Heart right ventricle (tissue), 16 donors: ENCODE measurements at regions of chr9 and their contacts with region 1.

Region 1: GRCh38 chr9:128927731-128928411 is 7.1 kb downstream of the PHYHD1 start:
- DNase-seq: peak in 1 of 2 donors; percentile 54
- ATAC-seq: peak; percentile 56 to 86 (median 80)
- H3K4me3 ChIP-seq: no peak overlapping the region
- H3K27ac ChIP-seq: no peak overlapping the region
- H3K4me1 ChIP-seq: peaks cover 0 to 13% (median 8%) of the 10 kb centered on the region in 9 donors
- H3K27me3 ChIP-seq: no peaks in the 10 kb centered on the region
- CTCF ChIP-seq: peak; percentile 64 to 95 (median 85)

Region 2: GRCh38 chr9:128863647-128864046 is 64.2 kb before region 1 on chr9:
- intact Hi-C with region 1: loop called (anchors 1 to 2 kb)
- DNase-seq: peak; percentile 65 to 84
- ATAC-seq: peak; percentile 78 to 92 (median 86)
- H3K4me3 ChIP-seq: no peak overlapping the region
- H3K27ac ChIP-seq: no peak overlapping the region
- H3K4me1 ChIP-seq: peaks cover 0 to 22% (median 5%) of the 10 kb centered on the region in 9 donors
- H3K27me3 ChIP-seq: no peaks in the 10 kb centered on the region
- CTCF ChIP-seq: peak; percentile 93 to 99 (median 98)

Region 3: DNA sequence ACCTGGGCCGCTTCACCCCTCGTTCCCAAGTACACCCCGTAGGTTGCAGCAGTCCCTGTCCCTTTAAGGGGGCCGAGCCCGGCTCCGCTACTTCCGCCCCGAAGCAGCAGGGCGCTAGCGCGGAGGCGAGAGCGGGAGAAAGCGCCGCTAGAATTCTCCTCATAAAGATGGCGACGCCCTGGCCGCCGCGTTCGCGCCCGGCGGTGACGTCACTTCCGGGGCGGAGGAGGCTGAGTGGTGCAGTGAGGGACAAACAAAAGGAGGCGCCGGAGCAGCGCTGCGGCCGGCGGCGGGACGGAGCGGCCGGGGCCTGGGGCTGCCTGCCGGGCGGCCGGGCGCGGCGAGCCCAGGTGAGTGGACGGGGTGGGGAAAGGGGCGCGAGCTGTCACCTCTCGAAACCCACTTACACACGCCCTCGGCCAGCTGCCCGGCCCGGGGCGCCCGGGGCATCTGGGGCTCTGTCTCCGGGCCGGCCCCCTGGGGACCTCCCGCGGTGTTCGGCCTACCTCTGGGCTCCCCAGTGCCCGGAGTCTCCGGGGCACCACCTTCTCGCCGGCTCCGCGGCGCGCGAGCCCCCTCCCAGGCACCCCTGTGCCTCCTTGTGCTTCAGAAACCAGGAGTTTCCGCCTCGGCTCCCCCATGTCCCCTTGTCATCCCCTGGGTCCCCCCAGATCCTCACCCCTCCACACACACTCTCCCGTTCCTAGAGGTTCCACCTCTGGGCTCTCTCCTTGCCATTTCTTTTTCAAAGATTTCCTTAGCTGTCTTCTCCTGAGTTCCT is 45.8 kb before region 1 on chr9 and contains the starts of genes KYAT1 and LRRC8A:
- intact Hi-C with region 1: loop called in 4 of 10 experiments (anchors 2 to 5 kb)
- DNase-seq: peak; percentile 98 to 99
- ATAC-seq: peak; percentile 90 to 96 (median 94)
- H3K4me3 ChIP-seq: peak within 1 kb of the TSS; percentile 81 to 99 (median 96)
- H3K27ac ChIP-seq: peak within 1 kb of the TSS; percentile 96 to 100 (median 98)
- H3K4me1 ChIP-seq: peaks cover 4 to 79% (median 64%) of the 10 kb centered on the region in 9 donors
- H3K27me3 ChIP-seq: no peaks in the 10 kb centered on the region
- CTCF ChIP-seq: peak in 4 of 9 donors; percentile 14 to 39 (median 24)
- total RNA-seq, gene KYAT1: 8.9 to 20.3 (median 11.1) TPM
- total RNA-seq, gene LRRC8A: 15.2 to 45.1 (median 19.6) TPM